K562 (cell line): ENCODE measurements at regions of chr19 and their contacts with region 1.

Region 1: DNA sequence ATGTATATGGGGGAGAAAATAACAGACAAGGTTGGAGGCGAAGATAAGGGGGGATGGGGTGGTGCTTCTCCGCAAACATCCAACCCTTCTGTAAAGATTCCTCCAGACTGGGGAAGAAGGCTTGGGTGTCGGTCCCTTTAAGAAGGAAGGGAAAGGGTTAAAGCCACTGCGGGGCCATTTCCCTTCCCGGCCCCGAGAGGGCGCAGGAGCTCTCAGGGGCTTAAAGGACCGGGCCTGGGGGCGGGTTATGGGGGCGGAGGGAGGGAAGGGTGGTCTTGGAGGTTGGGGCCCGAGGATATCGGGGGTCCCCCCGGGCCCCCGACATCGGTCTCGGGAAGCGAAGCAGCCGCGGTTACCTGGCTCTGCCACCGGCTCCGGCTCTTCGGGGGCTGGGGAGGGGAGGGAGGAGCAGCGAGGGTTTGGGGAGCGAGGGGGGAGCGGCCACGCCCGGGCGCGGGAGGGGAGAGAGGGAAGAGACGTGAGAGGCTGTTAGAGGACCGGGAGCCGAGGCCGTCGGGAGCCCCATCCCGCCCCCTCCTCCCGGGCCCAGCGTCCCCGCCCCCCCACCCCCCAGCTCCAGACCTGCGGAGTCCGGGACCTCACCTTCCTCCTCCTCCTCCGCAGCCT is 2.8 kb downstream of the TNNT1 start:
- DNase-seq: peak; percentile 88 to 92 (median 90)
- ATAC-seq: peak; percentile 87
- H3K4me3 ChIP-seq: peak overlapping the region; percentile 88
- H3K27ac ChIP-seq: peak overlapping the region; percentile 69
- H3K4me1 ChIP-seq: peaks cover 16 to 54% of the 10 kb centered on the region in 2 experiments
- H3K27me3 ChIP-seq: no peaks in the 10 kb centered on the region
- CTCF ChIP-seq: peak; percentile 84 to 93 (median 85)
- EP300 ChIP-seq: peak; percentile 57; the same call in 1 of the 2 replicates
- POLR2A ChIP-seq: no peak
- RAD21 ChIP-seq: peak; percentile 43 to 53

Region 2: DNA sequence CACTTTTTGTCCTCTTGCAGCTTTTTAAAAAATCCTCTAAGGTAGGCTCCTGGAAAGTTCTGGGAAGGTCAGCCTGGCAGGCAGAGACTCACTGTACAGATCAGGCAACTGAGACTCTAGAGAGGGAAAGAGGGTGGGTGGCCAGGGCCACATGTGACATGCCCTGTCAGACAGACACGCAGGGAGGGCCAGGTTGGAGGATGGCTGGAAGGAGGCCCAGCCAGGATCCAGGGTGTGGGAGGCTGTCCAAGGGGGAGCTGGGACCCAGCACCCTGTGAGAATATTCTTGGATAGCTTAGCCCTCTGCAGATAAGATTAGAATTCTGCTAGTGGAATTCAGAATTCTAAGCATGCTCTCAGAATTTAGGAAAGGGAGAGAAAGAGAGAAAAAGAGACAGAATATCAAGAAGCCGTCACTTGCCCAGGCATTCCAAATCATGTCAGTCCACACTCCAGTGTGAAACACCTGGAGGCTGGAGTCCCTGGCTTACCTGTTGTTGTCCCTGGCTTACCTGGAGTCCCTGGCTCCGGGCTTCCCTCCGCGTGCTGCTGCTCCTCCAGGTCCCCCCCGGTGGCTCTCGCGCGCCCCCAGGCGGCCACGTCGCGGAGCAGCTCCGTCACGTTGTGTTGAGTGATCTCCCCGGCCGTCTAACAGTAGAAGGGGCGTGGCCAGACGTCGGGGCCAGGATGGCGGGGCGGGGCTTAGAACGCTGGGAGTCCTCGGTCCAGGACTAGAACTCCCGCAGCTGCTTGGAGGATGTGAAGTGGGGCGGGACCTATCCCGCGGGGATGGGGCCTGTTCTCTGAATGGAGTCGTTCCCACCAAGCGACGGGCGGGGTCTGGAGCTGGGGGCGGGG is 14.2 kb after region 1 on chr19:
- CTCF ChIA-PET with region 1: interaction called, 20 read pairs
- POLR2A ChIA-PET with region 1: interaction called, 13 read pairs
- in situ Hi-C with region 1: no loop called
- intact Hi-C with region 1: loop called (anchors 1 kb)
- DNase-seq: peak; percentile 92 to 98 (median 92)
- ATAC-seq: peak; percentile 75
- H3K4me3 ChIP-seq: peak overlapping the region; percentile 42
- H3K27ac ChIP-seq: peak overlapping the region; percentile 66
- H3K4me1 ChIP-seq: peaks cover 34 to 69% of the 10 kb centered on the region in 2 experiments
- H3K27me3 ChIP-seq: no peaks in the 10 kb centered on the region
- CTCF ChIP-seq: peak; percentile 97 to 98 (median 97)
- EP300 ChIP-seq: peak; percentile 32; the same call in 1 of the 2 replicates
- POLR2A ChIP-seq: no peak
- RAD21 ChIP-seq: peak; percentile 93 to 97

Region 3: GRCh38 chr19:55216461-55217198 is 70.4 kb after region 1 on chr19:
- CTCF ChIA-PET with region 1: no interaction called
- POLR2A ChIA-PET with region 1: no interaction called
- in situ Hi-C with region 1: no loop called
- intact Hi-C with region 1: no loop called
- DNase-seq: peak; percentile 88 to 99 (median 92)
- ATAC-seq: peak; percentile 83
- H3K4me3 ChIP-seq: peak overlapping the region; percentile 57
- H3K27ac ChIP-seq: peak overlapping the region; percentile 93
- H3K4me1 ChIP-seq: peaks cover 18 to 20% of the 10 kb centered on the region in 2 experiments; a peak in 4 of 5 replicates
- H3K27me3 ChIP-seq: no peaks in the 10 kb centered on the region
- CTCF ChIP-seq: no peak
- EP300 ChIP-seq: peak; percentile 94
- POLR2A ChIP-seq: peak; percentile 86
- RAD21 ChIP-seq: peak in 1 of 2 experiments; percentile 40; a peak in 2 of 4 replicates